ENCODE measurements at regions of chr17 and their contacts with region 1.

Region 1: GRCh38 chr17:40362696-40363110 is 1.8 kb downstream of the GJD3 start:
- DNase-seq: peak; percentile 93 to 97
- ATAC-seq: peak; percentile 83 to 86
- H3K4me3 ChIP-seq: peak overlapping the region; percentile 61
- H3K27ac ChIP-seq: peak overlapping the region; percentile 84 to 95
- H3K4me1 ChIP-seq: peaks cover 30% of the 10 kb centered on the region
- CTCF ChIP-seq: peak; percentile 85
- EP300 ChIP-seq: no peak
- POLR2A ChIP-seq: peak; percentile 74
- RAD21 ChIP-seq: peak; percentile 73 to 85

Region 2: GRCh38 chr17:39835038-39835786 is 527.5 kb before region 1 on chr17:
- CTCF ChIA-PET with region 1: no interaction called
- POLR2A ChIA-PET with region 1: no interaction called
- DNase-seq: no peak
- ATAC-seq: peak; percentile 30 to 31; a peak in 1 of 6 replicates
- H3K4me3 ChIP-seq: no peak overlapping the region
- H3K27ac ChIP-seq: no peak overlapping the region
- H3K4me1 ChIP-seq: no peaks in the 10 kb centered on the region
- CTCF ChIP-seq: no peak
- EP300 ChIP-seq: no peak
- POLR2A ChIP-seq: no peak
- RAD21 ChIP-seq: no peak

Region 3: DNA sequence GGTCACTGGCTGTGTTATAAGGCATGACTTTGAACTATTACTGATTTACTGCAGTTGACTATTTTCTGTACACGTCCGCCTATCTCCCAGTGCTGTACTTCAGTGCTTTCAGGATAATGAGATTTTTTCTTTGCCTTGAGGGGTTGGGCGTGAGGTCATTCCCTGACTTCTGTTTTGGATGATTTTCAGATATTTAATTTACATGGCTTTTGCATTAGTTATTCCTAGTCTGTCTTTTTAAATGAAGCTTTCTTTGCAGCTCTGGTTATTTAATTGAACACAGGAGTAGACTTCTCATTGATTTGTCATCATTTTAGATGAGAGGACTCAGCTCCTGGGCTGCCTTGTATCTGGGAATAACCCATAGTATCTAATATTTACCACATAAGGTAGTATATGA is 119.9 kb before region 1 on chr17:
- CTCF ChIA-PET with region 1: no interaction called
- POLR2A ChIA-PET with region 1: no interaction called
- DNase-seq: no peak
- ATAC-seq: no peak
- H3K4me3 ChIP-seq: no peak overlapping the region
- H3K27ac ChIP-seq: no peak overlapping the region
- H3K4me1 ChIP-seq: no peaks in the 10 kb centered on the region
- CTCF ChIP-seq: no peak
- EP300 ChIP-seq: no peak
- POLR2A ChIP-seq: no peak
- RAD21 ChIP-seq: no peak

Region 4: DNA sequence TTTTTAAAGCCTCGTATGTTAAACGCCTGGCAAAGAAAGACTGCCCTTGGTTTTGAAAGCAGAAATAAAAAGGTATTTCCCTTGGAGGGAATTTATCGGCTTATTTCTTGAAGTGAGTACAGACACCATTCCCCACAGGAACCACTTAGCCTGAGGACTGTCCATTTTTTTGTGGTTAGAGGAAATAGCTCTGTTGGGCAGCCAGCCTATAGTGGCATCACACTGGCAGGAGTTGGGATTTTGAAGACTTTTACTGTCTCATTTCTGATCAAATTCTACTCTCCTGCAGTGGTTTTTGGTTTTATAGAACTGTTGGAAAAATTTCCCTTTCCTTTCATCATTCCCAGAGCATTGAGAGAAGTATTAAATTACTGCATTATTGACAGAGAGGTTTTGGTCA is 109.1 kb before region 1 on chr17:
- CTCF ChIA-PET with region 1: no interaction called
- POLR2A ChIA-PET with region 1: no interaction called
- DNase-seq: no peak
- ATAC-seq: no peak
- H3K4me3 ChIP-seq: no peak overlapping the region
- H3K27ac ChIP-seq: no peak overlapping the region
- H3K4me1 ChIP-seq: peaks cover 13% of the 10 kb centered on the region
- CTCF ChIP-seq: no peak
- EP300 ChIP-seq: no peak
- POLR2A ChIP-seq: no peak
- RAD21 ChIP-seq: no peak

Region 5: DNA sequence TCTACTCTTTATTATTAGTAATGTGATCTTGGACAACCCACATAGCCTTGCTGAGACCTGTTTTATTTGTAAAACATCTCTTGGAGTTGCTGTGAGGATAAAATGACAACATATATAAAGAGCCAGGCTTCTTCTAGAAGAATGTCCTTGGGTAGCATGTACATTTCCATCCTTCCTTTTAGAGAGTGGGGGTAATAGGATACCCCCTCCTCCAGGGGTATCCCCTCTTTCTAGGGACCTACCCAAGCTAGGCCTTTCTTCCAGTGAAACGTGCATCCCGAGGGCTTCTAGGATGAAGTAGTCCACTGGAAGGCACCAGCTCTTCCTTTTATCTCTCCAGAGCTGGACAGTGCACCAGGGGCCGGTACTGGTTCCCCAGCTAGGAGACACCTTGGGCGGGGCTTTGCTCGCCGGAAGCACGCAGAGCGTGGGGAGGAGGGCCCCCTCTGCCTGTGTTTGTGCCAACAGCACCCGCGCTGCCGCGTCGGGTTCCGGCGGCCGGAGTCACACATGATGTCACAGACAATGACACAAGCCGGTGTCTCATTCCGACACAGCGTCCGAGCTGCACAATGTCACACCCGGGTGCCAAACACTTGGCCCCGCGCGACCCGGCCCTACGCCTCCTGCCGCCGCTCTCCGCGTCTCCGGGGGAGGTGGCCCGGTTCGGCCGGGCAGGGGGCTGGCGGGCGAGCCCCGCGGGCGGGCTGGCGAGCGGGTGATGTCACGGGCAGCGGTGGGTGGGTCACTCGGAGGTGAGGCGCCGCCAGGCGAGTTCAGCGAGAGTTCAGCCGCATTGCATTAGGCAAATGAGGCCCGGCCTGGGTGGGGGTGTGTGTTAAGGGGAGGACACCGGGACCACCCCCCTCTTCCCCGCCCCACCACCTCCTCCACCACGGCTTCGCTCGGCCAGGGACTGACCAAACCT is 21.6 kb before region 1 on chr17:
- CTCF ChIA-PET with region 1: interaction called, 2,395 read pairs
- POLR2A ChIA-PET with region 1: interaction called, 3 read pairs
- DNase-seq: peak; percentile 92 to 93
- ATAC-seq: peak; percentile 76 to 79
- H3K4me3 ChIP-seq: peak overlapping the region; percentile 83
- H3K27ac ChIP-seq: peak overlapping the region; percentile 91 to 92
- H3K4me1 ChIP-seq: peaks cover 54% of the 10 kb centered on the region
- CTCF ChIP-seq: no peak
- EP300 ChIP-seq: no peak
- POLR2A ChIP-seq: no peak
- RAD21 ChIP-seq: no peak

Region 6: GRCh38 chr17:40378966-40379365 is 16.3 kb after region 1 on chr17:
- CTCF ChIA-PET with region 1: interaction called, 55 read pairs
- POLR2A ChIA-PET with region 1: no interaction called
- DNase-seq: no peak
- ATAC-seq: no peak
- H3K4me3 ChIP-seq: no peak overlapping the region
- H3K27ac ChIP-seq: no peak overlapping the region
- H3K4me1 ChIP-seq: no peaks in the 10 kb centered on the region
- CTCF ChIP-seq: no peak
- EP300 ChIP-seq: no peak
- POLR2A ChIP-seq: no peak
- RAD21 ChIP-seq: no peak

Region 7: DNA sequence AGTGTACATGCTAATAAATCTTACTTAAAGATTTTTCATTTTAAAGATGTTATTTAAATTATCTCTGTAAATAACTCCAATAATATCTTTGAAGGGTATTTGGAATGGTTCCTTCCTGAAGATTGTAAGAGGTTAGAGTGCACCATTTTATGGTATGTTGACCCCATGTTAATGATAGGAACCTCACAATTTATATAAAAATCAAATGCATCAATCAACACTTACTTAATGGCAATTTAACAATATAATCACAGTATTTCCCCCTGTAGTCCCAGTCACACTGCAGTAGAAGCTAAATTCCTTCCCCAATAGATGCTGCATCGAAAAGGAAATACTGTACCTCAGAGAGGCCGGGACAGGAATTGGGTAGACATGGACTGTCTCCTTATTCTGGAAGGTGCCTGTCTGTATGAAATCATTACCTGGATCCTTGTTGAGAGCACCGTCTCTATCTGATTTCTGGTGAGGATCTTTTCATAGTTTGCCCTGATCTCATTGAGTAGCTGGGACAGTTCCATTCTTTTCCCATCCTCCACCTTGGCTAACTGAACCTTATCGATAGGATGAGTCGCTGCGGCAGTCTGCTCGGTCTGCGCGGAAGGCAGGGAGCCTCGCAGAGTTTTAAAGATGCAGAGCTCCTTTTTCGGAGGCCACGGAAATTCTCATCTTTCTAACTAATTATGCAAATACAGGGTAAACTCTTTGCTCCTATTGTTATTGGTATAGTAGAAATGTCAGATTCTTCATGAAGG is 302.1 kb after region 1 on chr17 and contains the start of gene KRT222:
- CTCF ChIA-PET with region 1: no interaction called
- POLR2A ChIA-PET with region 1: no interaction called
- DNase-seq: no peak
- ATAC-seq: peak; percentile 61 to 77; a peak in 4 of 6 replicates
- H3K4me3 ChIP-seq: peak within 1 kb of the TSS; percentile 34
- H3K27ac ChIP-seq: peak within 1 kb of the TSS; percentile 25 to 68; a peak in 5 of 6 replicates
- H3K4me1 ChIP-seq: peaks cover 7% of the 10 kb centered on the region; the same call in 2 of the 3 replicates
- CTCF ChIP-seq: no peak
- EP300 ChIP-seq: no peak
- POLR2A ChIP-seq: no peak
- RAD21 ChIP-seq: no peak
- polyA plus RNA-seq, gene KRT222: 1.3 and 1.8 TPM in 2 replicates